CD4-positive, alpha-beta memory T cell (primary cell): ENCODE measurements at regions of chrX and their contacts with region 1.

Region 1: GRCh38 chrX:39445336-39445735 is 644.1 kb downstream of the MID1IP1 start:
- DNase-seq: peak; percentile 12 to 38 (median 18)
- H3K4me3 ChIP-seq: no peak overlapping the region
- H3K4me3 Mint-ChIP-seq: no peak overlapping the region
- H3K27ac ChIP-seq: no peak overlapping the region
- H3K27ac Mint-ChIP-seq: no peak overlapping the region
- H3K4me1 ChIP-seq: peaks cover 4% of the 10 kb centered on the region
- H3K4me1 Mint-ChIP-seq: peaks cover 2 to 10% (median 8%) of the 10 kb centered on the region in 4 donors
- H3K27me3 ChIP-seq: no peaks in the 10 kb centered on the region
- H3K27me3 Mint-ChIP-seq: no peaks in the 10 kb centered on the region

Region 2: DNA sequence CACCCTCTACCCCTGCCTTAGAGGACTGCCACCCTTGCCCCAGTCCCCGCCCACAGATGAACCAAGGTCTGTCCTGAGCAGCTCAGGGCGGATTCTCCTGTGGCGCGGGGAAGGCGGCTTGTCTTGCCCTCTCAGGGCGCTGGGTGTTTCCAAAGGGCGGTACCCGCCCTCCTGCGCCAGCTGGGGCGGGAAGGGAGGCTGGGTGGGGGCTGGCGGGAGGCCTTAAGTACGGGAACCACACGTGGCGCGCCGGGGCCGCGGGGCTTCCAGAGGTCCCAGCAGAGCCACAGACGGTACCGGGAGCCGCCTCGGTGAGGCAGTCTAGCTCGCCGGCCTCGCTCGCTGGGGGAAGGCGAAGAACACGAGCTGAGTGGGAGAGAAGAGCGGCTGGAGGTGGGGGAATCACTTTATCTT is 283.0 kb before region 1 on chrX:
- CTCF ChIA-PET with region 1: no interaction called
- POLR2A ChIA-PET with region 1: no interaction called
- intact Hi-C with region 1: loop called (anchors 1 kb)
- DNase-seq: peak; percentile 13 to 42 (median 29)
- H3K4me3 ChIP-seq: no peak overlapping the region
- H3K4me3 Mint-ChIP-seq: peak overlapping the region in 5 of 8 donors; percentile 41 to 73 (median 62)
- H3K27ac ChIP-seq: no peak overlapping the region
- H3K27ac Mint-ChIP-seq: peak overlapping the region in 1 of 7 donors; percentile 63
- H3K4me1 ChIP-seq: peaks cover under 1% of the 10 kb centered on the region
- H3K4me1 Mint-ChIP-seq: peaks cover 4 to 10% (median 6%) of the 10 kb centered on the region in 4 donors
- H3K27me3 ChIP-seq: no peaks in the 10 kb centered on the region
- H3K27me3 Mint-ChIP-seq: peaks cover 2 to 4% of the 10 kb centered on the region in 2 donors

Region 3: DNA sequence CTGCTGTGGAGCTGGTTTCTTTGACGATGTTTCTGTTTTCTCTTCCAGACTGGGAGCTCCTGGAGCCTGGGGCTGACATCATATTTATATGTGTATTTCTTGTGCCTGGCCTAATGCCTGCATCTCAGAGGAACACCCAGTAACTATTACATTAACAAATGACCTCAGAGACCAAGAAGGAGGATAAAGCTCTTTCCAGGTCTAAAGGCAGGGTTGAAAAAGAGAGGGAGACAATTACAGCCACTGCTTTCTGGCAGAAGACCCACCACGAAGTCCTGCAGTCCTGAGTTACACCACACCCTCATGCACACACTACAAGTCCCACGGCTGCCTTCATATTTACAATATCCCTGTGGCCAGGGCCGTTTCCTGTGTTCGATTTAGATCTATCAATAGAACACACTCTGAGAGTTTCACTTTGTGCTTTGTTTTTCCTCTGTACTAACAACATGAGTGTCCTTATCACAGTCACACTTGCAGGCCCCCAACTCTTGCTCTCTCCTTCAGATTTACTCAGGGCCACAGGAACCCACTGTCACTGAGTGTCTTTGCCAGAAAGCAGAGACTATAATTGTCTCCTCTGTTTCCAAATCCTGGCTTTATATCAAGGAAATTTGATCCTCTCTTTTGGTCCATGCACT is 108.5 kb before region 1 on chrX:
- CTCF ChIA-PET with region 1: no interaction called
- POLR2A ChIA-PET with region 1: no interaction called
- intact Hi-C with region 1: loop called (anchors 10 kb)
- DNase-seq: peak in 3 of 5 donors; percentile 14 to 32 (median 15)
- H3K4me3 ChIP-seq: peak overlapping the region in 1 of 2 donors; percentile 14
- H3K4me3 Mint-ChIP-seq: peak overlapping the region in 7 of 8 donors; percentile 53 to 80 (median 62)
- H3K27ac ChIP-seq: peak overlapping the region; percentile 25
- H3K27ac Mint-ChIP-seq: peak overlapping the region; percentile 60 to 93 (median 86)
- H3K4me1 ChIP-seq: peaks cover 35% of the 10 kb centered on the region
- H3K4me1 Mint-ChIP-seq: peaks cover 24 to 37% (median 31%) of the 10 kb centered on the region in 4 donors
- H3K27me3 ChIP-seq: no peaks in the 10 kb centered on the region
- H3K27me3 Mint-ChIP-seq: no peaks in the 10 kb centered on the region

Region 4: GRCh38 chrX:39377157-39377556 is 68.2 kb before region 1 on chrX:
- CTCF ChIA-PET with region 1: no interaction called
- POLR2A ChIA-PET with region 1: no interaction called
- intact Hi-C with region 1: no loop called
- DNase-seq: no peak
- H3K4me3 ChIP-seq: no peak overlapping the region
- H3K4me3 Mint-ChIP-seq: no peak overlapping the region
- H3K27ac ChIP-seq: no peak overlapping the region
- H3K27ac Mint-ChIP-seq: no peak overlapping the region
- H3K4me1 ChIP-seq: no peaks in the 10 kb centered on the region
- H3K4me1 Mint-ChIP-seq: no peaks in the 10 kb centered on the region
- H3K27me3 ChIP-seq: no peaks in the 10 kb centered on the region
- H3K27me3 Mint-ChIP-seq: no peaks in the 10 kb centered on the region